ENCODE measurements at regions of chr14 and their contacts with region 1.

Region 1: GRCh38 chr14:34322940-34323418 is 139.1 kb downstream of the SPTSSA start:
- DNase-seq: peak; percentile 69
- ATAC-seq: peak; percentile 60
- H3K4me3 ChIP-seq: no peak overlapping the region
- H3K4me3 Mint-ChIP-seq: no peak overlapping the region
- H3K27ac ChIP-seq: no peak overlapping the region
- H3K27ac Mint-ChIP-seq: no peak overlapping the region
- H3K4me1 ChIP-seq: no peaks in the 10 kb centered on the region
- H3K4me1 Mint-ChIP-seq: no peaks in the 10 kb centered on the region
- H3K27me3 ChIP-seq: no peaks in the 10 kb centered on the region
- H3K27me3 Mint-ChIP-seq: peaks cover 12% of the 10 kb centered on the region
- CTCF ChIP-seq: peak; percentile 82

Region 2: GRCh38 chr14:34310724-34311123 is 12.3 kb before region 1 on chr14:
- CTCF ChIA-PET with region 1: interaction called, 13 read pairs
- POLR2A ChIA-PET with region 1: no interaction called
- intact Hi-C with region 1: no loop called
- DNase-seq: no peak
- ATAC-seq: no peak
- H3K4me3 ChIP-seq: no peak overlapping the region
- H3K4me3 Mint-ChIP-seq: no peak overlapping the region
- H3K27ac ChIP-seq: no peak overlapping the region
- H3K27ac Mint-ChIP-seq: no peak overlapping the region
- H3K4me1 ChIP-seq: no peaks in the 10 kb centered on the region
- H3K4me1 Mint-ChIP-seq: no peaks in the 10 kb centered on the region
- H3K27me3 ChIP-seq: peaks cover 0 to 7% (median 2%) of the 10 kb centered on the region in 4 experiments
- H3K27me3 Mint-ChIP-seq: peaks cover 30% of the 10 kb centered on the region
- CTCF ChIP-seq: no peak